Naive thymus-derived CD4-positive, alpha-beta T cell (primary cell): ENCODE measurements at regions of chr7 and their contacts with region 1.

Region 1: GRCh38 chr7:149624419-149625339 is 127.1 kb upstream of the ZNF746 start:
- DNase-seq: peak; percentile 79 to 93 (median 84)
- ATAC-seq: peak; percentile 95
- H3K4me3 ChIP-seq: peak overlapping the region; percentile 88
- H3K4me3 Mint-ChIP-seq: peak overlapping the region; percentile 91 to 96 (median 94)
- H3K27ac ChIP-seq: peak overlapping the region; percentile 80
- H3K27ac Mint-ChIP-seq: peak overlapping the region; percentile 50 to 95 (median 90)
- H3K4me1 ChIP-seq: peaks cover 19 to 37% of the 10 kb centered on the region in 2 donors
- H3K4me1 Mint-ChIP-seq: peaks cover 28 to 42% (median 37%) of the 10 kb centered on the region in 7 donors
- H3K27me3 ChIP-seq: no peaks in the 10 kb centered on the region
- H3K27me3 Mint-ChIP-seq: peaks cover 0 to 24% (median 4%) of the 10 kb centered on the region in 5 donors

Region 2: GRCh38 chr7:149147072-149147751 is 477.5 kb before region 1 on chr7 and contains the start of gene ZNF398:
- CTCF ChIA-PET with region 1: no interaction called
- POLR2A ChIA-PET with region 1: no interaction called
- intact Hi-C with region 1: loop called (anchors 1 kb)
- DNase-seq: peak; percentile 77 to 91 (median 85)
- ATAC-seq: peak; percentile 92
- H3K4me3 ChIP-seq: peak within 1 kb of the TSS; percentile 98
- H3K4me3 Mint-ChIP-seq: peak within 1 kb of the TSS; percentile 88 to 98 (median 93)
- H3K27ac ChIP-seq: peak within 1 kb of the TSS; percentile 86
- H3K27ac Mint-ChIP-seq: peak within 1 kb of the TSS; percentile 90 to 98 (median 95)
- H3K4me1 ChIP-seq: peaks cover 8 to 23% of the 10 kb centered on the region in 2 donors
- H3K4me1 Mint-ChIP-seq: peaks cover 24 to 52% (median 42%) of the 10 kb centered on the region in 7 donors
- H3K27me3 ChIP-seq: no peaks in the 10 kb centered on the region
- H3K27me3 Mint-ChIP-seq: no peaks in the 10 kb centered on the region
- total RNA-seq, gene ZNF398: 14.6 to 27.9 (median 16.9) TPM

Region 3: DNA sequence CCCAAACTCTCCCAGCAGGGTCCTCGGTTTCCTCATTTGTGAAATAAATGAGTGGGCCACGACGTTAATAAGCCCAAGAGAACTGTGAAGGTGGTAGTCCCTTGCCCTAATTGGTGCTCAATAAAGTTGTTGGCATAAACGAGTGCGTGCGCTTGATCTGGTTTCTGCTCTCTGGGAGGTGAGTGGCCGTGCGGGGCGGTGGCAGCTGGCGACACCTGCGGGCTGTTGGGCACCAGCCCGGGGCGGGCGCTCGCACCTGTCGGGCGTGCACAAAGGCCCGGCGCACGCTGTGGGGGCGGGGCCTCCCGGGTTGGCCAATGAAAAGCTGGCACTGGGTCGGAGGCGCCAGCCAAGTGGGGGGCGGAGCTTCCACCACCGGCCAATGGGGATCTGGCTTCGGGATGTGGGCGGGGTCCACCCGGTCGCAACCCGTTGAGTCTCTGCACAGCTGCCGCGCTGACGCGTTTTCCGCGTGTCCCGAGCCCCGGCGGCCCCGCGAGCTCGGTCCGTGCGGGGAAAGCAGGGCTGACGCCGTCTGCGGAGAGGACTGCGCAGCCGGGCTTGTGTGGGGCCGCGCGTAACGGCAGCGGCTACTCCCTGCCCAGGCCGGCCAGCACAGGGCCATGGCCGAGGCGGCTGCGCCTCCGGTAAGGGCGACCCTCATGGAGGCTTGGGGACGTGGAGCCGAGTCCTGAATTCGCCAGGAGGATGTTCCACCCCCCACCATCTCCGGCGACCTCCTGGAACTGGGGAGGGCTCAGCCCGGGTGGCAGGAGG is 339.6 kb before region 1 on chr7:
- CTCF ChIA-PET with region 1: no interaction called
- POLR2A ChIA-PET with region 1: interaction called, 3 read pairs
- intact Hi-C with region 1: loop called (anchors 1 kb)
- DNase-seq: peak; percentile 96 to 99 (median 98)
- ATAC-seq: peak; percentile 98
- H3K4me3 ChIP-seq: peak overlapping the region; percentile 80
- H3K4me3 Mint-ChIP-seq: peak overlapping the region; percentile 79 to 97 (median 92)
- H3K27ac ChIP-seq: peak overlapping the region; percentile 72
- H3K27ac Mint-ChIP-seq: peak overlapping the region; percentile 76 to 96 (median 93)
- H3K4me1 ChIP-seq: peaks cover 30 to 36% of the 10 kb centered on the region in 2 donors
- H3K4me1 Mint-ChIP-seq: peaks cover 26 to 55% (median 46%) of the 10 kb centered on the region in 7 donors
- H3K27me3 ChIP-seq: no peaks in the 10 kb centered on the region
- H3K27me3 Mint-ChIP-seq: no peaks in the 10 kb centered on the region

Region 4: DNA sequence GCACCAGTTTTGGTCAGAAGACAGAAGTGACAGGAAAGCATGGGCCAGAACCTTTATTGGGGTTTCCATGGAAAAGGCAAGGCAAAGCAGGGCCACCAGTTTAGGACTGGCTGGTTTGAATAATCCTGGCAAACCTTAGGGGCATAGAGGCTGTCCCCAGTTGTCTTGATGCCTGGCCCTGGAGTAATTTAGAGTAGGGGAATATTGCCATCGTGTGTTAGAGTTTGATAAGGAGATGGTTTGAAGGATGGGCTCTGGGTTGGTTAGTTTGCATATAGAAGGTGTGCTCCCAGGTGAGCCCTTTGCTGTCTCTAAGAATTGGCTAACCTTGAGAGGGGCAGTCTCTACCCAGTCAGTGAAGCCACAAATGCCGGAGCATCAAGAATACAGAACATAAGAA is 243.4 kb before region 1 on chr7:
- CTCF ChIA-PET with region 1: no interaction called
- POLR2A ChIA-PET with region 1: no interaction called
- intact Hi-C with region 1: no loop called
- DNase-seq: no peak
- ATAC-seq: no peak
- H3K4me3 ChIP-seq: no peak overlapping the region
- H3K4me3 Mint-ChIP-seq: no peak overlapping the region
- H3K27ac ChIP-seq: no peak overlapping the region
- H3K27ac Mint-ChIP-seq: no peak overlapping the region
- H3K4me1 ChIP-seq: no peaks in the 10 kb centered on the region
- H3K4me1 Mint-ChIP-seq: no peaks in the 10 kb centered on the region
- H3K27me3 ChIP-seq: no peaks in the 10 kb centered on the region
- H3K27me3 Mint-ChIP-seq: peaks cover 1 to 20% (median 11%) of the 10 kb centered on the region in 5 donors

Region 5: GRCh38 chr7:149489391-149490024 is 135.2 kb before region 1 on chr7:
- CTCF ChIA-PET with region 1: interaction called, 3 read pairs
- POLR2A ChIA-PET with region 1: no interaction called
- intact Hi-C with region 1: loop called in 1 of 2 experiments (anchors 2 kb)
- DNase-seq: no peak
- ATAC-seq: peak; percentile 66
- H3K4me3 ChIP-seq: no peak overlapping the region
- H3K4me3 Mint-ChIP-seq: no peak overlapping the region
- H3K27ac ChIP-seq: no peak overlapping the region
- H3K27ac Mint-ChIP-seq: peak overlapping the region in 5 of 9 donors; percentile 21 to 91 (median 58)
- H3K4me1 ChIP-seq: no peaks in the 10 kb centered on the region
- H3K4me1 Mint-ChIP-seq: peaks cover 3 to 26% (median 16%) of the 10 kb centered on the region in 7 donors
- H3K27me3 ChIP-seq: no peaks in the 10 kb centered on the region
- H3K27me3 Mint-ChIP-seq: no peaks in the 10 kb centered on the region

Region 6: DNA sequence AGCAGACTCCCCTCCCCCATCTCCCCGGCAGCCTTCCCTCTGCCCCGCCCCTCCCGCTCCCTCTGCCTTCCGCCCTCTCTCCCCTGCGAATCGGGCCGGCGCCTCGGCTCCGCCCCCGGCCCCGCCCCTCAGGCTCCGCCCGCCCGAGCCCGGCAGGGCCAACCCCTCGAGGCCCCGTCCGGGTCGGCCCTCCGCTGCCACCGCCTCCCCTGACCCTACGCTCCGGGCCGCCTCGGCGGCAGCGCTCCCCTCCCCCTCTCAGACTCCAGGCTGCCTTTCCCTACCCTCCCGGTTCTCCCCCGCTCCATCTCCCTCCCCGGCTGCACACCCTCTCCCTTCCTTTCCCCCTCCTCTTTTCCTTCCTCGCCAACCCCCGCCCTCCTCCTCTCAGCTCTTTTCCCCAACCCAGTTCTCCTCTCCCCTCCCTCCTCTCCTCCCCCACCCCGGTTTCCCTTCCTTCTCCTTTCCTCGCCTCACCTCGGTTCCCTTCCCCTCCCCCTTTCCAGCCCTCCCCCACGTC is 147.1 kb after region 1 on chr7:
- CTCF ChIA-PET with region 1: no interaction called
- POLR2A ChIA-PET with region 1: no interaction called
- intact Hi-C with region 1: loop called in 1 of 2 experiments (anchors 1 kb)
- DNase-seq: peak; percentile 74 to 89 (median 85)
- ATAC-seq: peak; percentile 94
- H3K4me3 ChIP-seq: peak overlapping the region; percentile 72
- H3K4me3 Mint-ChIP-seq: peak overlapping the region; percentile 16 to 88 (median 78)
- H3K27ac ChIP-seq: peak overlapping the region; percentile 71
- H3K27ac Mint-ChIP-seq: peak overlapping the region in 6 of 9 donors; percentile 10 to 70 (median 42)
- H3K4me1 ChIP-seq: peaks cover 5 to 8% of the 10 kb centered on the region in 2 donors
- H3K4me1 Mint-ChIP-seq: peaks cover 2 to 29% (median 21%) of the 10 kb centered on the region in 7 donors
- H3K27me3 ChIP-seq: no peaks in the 10 kb centered on the region
- H3K27me3 Mint-ChIP-seq: peaks cover 0 to 46% (median 0%) of the 10 kb centered on the region in 5 donors

Region 7: DNA sequence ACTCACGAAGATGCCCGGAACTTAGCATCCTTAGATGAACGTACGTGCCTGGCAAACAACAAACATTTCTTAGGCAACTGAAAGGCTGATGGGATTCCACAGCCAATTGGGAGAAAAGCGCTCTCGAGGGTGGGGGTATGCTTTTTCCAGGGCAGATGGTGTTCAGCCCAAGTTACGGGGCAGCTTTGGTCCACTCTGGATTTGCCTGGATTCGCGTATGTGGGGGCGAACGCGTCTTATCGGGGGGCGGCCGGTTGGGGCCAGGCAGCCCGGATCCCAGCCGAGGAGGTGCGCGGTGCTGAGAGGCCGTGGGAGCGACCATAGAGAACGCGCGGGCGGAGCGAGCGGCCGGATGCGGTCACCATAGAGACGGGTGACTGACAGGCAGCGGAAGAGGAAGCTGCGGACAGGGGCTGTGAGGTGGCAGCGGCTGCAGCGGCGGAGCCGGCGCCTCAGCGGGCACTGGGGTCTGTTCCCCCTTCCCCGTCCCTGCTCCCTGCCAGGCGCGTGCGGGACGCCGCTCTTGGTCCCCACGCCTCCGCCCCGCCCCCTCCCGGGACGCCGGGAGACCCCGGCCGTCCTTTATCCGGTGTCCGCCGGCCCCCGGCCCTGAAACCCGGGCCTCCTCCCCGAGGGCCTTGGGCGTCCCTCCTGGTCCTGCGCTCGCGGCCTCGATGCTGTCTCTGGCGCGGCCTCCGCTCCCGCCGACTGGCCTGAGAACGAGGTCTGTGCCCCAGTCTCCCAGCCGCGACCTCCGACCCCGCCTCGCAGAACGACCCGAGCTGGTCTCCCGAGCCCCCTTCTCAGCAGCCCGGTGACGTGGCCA is 1607.6 kb after region 1 on chr7 and contains the start of gene CHPF2:
- CTCF ChIA-PET with region 1: no interaction called
- POLR2A ChIA-PET with region 1: no interaction called
- intact Hi-C with region 1: loop called (anchors 1 to 2 kb)
- DNase-seq: peak; percentile 74 to 91 (median 84)
- ATAC-seq: peak; percentile 94
- H3K4me3 ChIP-seq: peak within 1 kb of the TSS; percentile 90
- H3K4me3 Mint-ChIP-seq: peak within 1 kb of the TSS; percentile 93 to 100 (median 98)
- H3K27ac ChIP-seq: peak within 1 kb of the TSS; percentile 85
- H3K27ac Mint-ChIP-seq: peak within 1 kb of the TSS; percentile 87 to 99 (median 98)
- H3K4me1 ChIP-seq: peaks cover 19 to 23% of the 10 kb centered on the region in 2 donors
- H3K4me1 Mint-ChIP-seq: peaks cover 30 to 45% (median 39%) of the 10 kb centered on the region in 7 donors
- H3K27me3 ChIP-seq: no peaks in the 10 kb centered on the region
- H3K27me3 Mint-ChIP-seq: peaks cover 0 to 6% (median 0%) of the 10 kb centered on the region in 5 donors
- total RNA-seq, gene CHPF2: 32.3 to 45.8 (median 42.8) TPM